Lower lobe of right lung (tissue), 2 donors: ENCODE measurements at regions of chr20 and their contacts with region 1.

Region 1: GRCh38 chr20:31605031-31605901 is at the start of gene ID1:
- DNase-seq: peak; percentile 97
- ATAC-seq: peak; percentile 89 to 91
- H3K4me3 ChIP-seq: peak within 1 kb of the TSS; percentile 81
- H3K27ac ChIP-seq: peak within 1 kb of the TSS; percentile 98
- H3K4me1 ChIP-seq: peaks cover 53% of the 10 kb centered on the region
- H3K27me3 ChIP-seq: no peaks in the 10 kb centered on the region
- CTCF ChIP-seq: no peak
- total RNA-seq, gene ID1: 196 TPM

Region 2: DNA sequence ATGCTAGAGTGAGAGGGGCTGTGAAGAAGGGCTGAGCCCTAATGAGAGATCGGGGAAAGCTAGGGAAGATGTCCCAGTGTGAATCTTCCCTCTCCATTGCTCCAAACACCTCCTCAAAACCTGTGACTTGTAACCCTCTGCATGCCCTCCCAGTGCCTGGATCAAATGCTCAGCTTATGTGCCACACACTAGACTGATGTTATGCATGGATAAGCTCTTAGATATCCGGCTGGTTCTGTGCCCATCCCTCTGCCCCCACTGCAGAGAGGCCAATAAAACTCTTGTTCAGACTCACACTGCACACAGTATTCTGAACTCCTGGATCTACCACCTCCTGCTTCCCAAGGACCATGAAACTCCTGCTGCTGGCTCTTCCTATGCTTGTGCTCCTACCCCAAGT is 237.0 kb before region 1 on chr20 and contains the start of gene DEFB118:
- intact Hi-C with region 1: no loop called
- DNase-seq: no peak
- ATAC-seq: no peak
- H3K4me3 ChIP-seq: no peak within 1 kb of the TSS
- H3K27ac ChIP-seq: no peak within 1 kb of the TSS
- H3K4me1 ChIP-seq: no peaks in the 10 kb centered on the region
- H3K27me3 ChIP-seq: no peaks in the 10 kb centered on the region
- CTCF ChIP-seq: no peak
- total RNA-seq, gene DEFB118: not detected

Region 3: GRCh38 chr20:31560094-31560899 is 45.0 kb before region 1 on chr20:
- intact Hi-C with region 1: loop called (anchors 5 kb)
- DNase-seq: peak; percentile 85
- ATAC-seq: peak; percentile 69 to 72
- H3K4me3 ChIP-seq: no peak overlapping the region
- H3K27ac ChIP-seq: peak overlapping the region; percentile 57
- H3K4me1 ChIP-seq: peaks cover 25% of the 10 kb centered on the region
- H3K27me3 ChIP-seq: no peaks in the 10 kb centered on the region
- CTCF ChIP-seq: peak; percentile 86